Common myeloid progenitor, CD34-positive (primary cell): ENCODE measurements at regions of chr5 and their contacts with region 1.

Region 1: GRCh38 chr5:177390363-177391300 is 6.4 kb downstream of the SLC34A1 start:
- DNase-seq: peak; percentile 88 to 96 (median 94)
- H3K4me3 ChIP-seq: no peak overlapping the region
- H3K27ac ChIP-seq: no peak overlapping the region
- H3K4me1 ChIP-seq: peaks cover 3 to 58% (median 37%) of the 10 kb centered on the region in 4 experiments
- H3K27me3 ChIP-seq: no peaks in the 10 kb centered on the region

Region 2: GRCh38 chr5:177317959-177318377 is 72.7 kb before region 1 on chr5:
- CTCF ChIA-PET with region 1: interaction called, 26 read pairs
- POLR2A ChIA-PET with region 1: no interaction called
- DNase-seq: peak; percentile 81 to 89 (median 83)
- H3K4me3 ChIP-seq: no peak overlapping the region
- H3K27ac ChIP-seq: no peak overlapping the region
- H3K4me1 ChIP-seq: peaks cover 4 to 25% (median 19%) of the 10 kb centered on the region in 4 experiments
- H3K27me3 ChIP-seq: no peaks in the 10 kb centered on the region

Region 3: DNA sequence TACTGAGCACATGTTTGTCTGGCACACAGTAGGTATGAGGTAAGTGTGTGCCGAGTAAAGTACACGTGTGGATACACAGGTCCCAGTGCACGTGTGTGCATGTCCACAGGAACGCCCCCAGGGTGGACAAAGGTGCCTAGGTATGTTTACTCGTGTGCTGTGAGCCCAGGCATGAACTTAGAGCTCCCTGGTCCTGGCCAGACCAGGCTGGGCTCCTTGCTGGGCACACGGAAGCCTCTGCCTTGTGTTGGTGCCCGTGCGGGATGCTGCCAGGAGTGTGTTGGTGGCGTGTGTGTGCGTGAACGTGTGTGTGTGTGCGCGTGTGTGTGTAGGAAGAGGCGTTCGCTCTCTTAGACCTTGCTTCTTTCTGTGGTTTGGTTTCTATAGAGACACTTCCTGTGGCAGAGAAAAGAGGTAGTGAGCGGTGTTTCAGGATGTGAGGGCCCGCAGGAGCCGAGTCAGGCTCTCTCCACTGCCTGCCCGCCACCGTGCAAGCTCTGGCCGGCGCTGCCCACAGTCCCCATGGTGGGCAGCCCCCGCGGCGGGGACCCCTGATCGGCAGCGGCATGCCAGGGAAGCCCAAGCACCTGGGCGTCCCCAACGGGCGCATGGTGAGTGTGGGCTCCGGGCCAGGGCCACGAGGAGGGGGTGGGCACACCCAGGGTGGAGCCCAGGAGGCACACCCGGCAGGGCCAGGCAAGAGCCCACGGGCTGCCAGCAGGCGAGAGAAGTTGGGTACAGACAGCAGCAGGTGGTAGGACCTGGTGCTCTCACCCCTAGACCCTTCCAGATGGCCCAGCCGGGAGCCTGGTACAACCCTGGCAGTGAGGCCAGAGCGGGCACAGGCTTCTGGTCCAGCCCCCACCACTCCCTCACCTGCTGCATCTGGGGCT is 32.9 kb before region 1 on chr5 and contains the start of gene RGS14:
- CTCF ChIA-PET with region 1: interaction called, 15 read pairs
- POLR2A ChIA-PET with region 1: no interaction called
- DNase-seq: peak; percentile 94 to 98 (median 96)
- H3K4me3 ChIP-seq: peak within 1 kb of the TSS; percentile 65 to 93 (median 84)
- H3K27ac ChIP-seq: peak within 1 kb of the TSS; percentile 77 to 85
- H3K4me1 ChIP-seq: peaks cover 8 to 83% (median 72%) of the 10 kb centered on the region in 4 experiments
- H3K27me3 ChIP-seq: no peaks in the 10 kb centered on the region

Region 4: GRCh38 chr5:177425801-177426565 is 35.4 kb after region 1 on chr5:
- CTCF ChIA-PET with region 1: interaction called, 22 read pairs
- POLR2A ChIA-PET with region 1: no interaction called
- DNase-seq: peak; percentile 100
- H3K4me3 ChIP-seq: peak overlapping the region; percentile 59 to 79 (median 71)
- H3K27ac ChIP-seq: peak overlapping the region; percentile 68 to 87
- H3K4me1 ChIP-seq: peaks cover 13 to 54% (median 50%) of the 10 kb centered on the region in 4 experiments
- H3K27me3 ChIP-seq: no peaks in the 10 kb centered on the region

Region 5: DNA sequence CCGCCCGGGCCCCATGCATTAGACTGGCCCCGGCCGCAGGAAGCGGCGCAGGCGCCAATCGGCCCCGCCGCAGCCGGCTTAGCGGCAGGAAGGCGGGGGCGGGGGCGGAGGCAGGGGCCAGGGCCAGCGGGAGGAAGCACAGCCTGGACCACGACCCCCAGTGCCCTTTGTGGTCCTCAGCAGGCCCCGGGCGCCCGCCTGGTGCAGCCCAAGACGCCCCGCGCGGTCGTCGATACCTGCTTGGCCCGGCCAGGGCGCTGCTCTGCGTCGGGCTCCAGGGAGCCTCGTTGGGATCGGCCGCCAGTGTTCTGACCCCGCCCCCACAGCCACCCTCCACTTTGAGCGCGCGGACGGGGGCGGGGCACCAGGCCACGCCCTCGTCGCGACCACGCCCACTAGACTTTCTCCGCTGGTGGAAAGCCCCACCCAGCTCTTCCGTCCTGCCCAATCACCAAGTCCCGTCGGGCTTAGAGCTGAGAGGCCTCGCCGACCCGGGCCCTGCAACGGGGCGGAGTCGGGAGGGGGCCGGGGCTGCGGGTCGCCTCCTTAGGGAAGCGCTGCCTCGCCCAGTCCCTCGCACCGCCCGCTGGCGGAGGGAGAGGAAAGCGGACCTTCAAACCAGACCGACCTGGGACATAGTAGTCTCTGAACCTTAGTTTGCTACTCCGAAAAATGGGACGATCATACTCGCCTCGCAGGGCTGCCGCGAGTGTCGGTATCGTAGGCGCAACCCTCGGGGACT is 106.8 kb after region 1 on chr5 and contains the start of gene PDLIM7:
- CTCF ChIA-PET with region 1: interaction called, 39 read pairs
- POLR2A ChIA-PET with region 1: no interaction called
- DNase-seq: peak; percentile 92 to 96 (median 95)
- H3K4me3 ChIP-seq: peak within 1 kb of the TSS; percentile 39 to 78 (median 69)
- H3K27ac ChIP-seq: peak within 1 kb of the TSS in 1 of 2 experiments; percentile 66
- H3K4me1 ChIP-seq: peaks cover 2 to 63% (median 50%) of the 10 kb centered on the region in 4 experiments
- H3K27me3 ChIP-seq: peaks cover 0 to 5% (median 0%) of the 10 kb centered on the region in 5 experiments

Region 6: DNA sequence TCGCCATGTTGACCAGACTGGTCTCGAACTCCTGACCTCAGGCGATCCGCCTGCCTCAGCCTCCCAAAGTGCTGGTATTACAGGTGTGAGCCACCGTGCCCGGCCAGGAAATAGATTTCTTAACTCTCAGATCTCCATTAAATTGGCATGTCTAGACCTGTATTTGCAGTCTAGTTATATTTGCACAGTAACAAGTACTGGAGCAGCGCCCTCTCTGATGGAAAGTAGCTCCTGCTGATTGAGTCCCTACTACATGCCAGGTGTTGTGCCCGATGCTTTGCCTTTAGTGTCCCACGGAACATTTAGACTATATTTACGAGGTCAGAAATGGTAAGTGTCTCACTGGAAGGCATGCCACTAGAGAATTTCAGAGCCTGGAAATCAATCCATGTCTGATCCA is 185.5 kb after region 1 on chr5:
- CTCF ChIA-PET with region 1: no interaction called
- POLR2A ChIA-PET with region 1: no interaction called
- DNase-seq: no peak
- H3K4me3 ChIP-seq: no peak overlapping the region
- H3K27ac ChIP-seq: no peak overlapping the region
- H3K4me1 ChIP-seq: no peaks in the 10 kb centered on the region
- H3K27me3 ChIP-seq: peaks cover 0 to 3% (median 0%) of the 10 kb centered on the region in 5 experiments